Activated T-helper 1 cell treated with anti-CD3 and anti-CD28 coated beads, Interleukin-12 subunit alpha, Interleukin-12 subunit beta, Interleukin-2, Interleukin-4 antibody, amounts not matched to agents 30 ng/mL and 10 ng/mL and 1 ng/mL, durations not matched to agents 14 hours and 24 hours and 36 hours (primary cell): ENCODE measurements at regions of chr1 and their contacts with region 1.

Region 1: GRCh38 chr1:99808391-99809115 is 41.6 kb upstream of the AGL start:
- DNase-seq: peak; percentile 29
- H3K4me3 Mint-ChIP-seq: no peak overlapping the region
- H3K27ac Mint-ChIP-seq: peak overlapping the region; percentile 15
- H3K4me1 Mint-ChIP-seq: peaks cover 17% of the 10 kb centered on the region
- H3K27me3 Mint-ChIP-seq: peaks cover 13% of the 10 kb centered on the region

Region 2: GRCh38 chr1:99786751-99787501 is 21.6 kb before region 1 on chr1:
- intact Hi-C with region 1: no loop called
- DNase-seq: no peak
- H3K4me3 Mint-ChIP-seq: no peak overlapping the region
- H3K27ac Mint-ChIP-seq: no peak overlapping the region
- H3K4me1 Mint-ChIP-seq: peaks cover 26% of the 10 kb centered on the region
- H3K27me3 Mint-ChIP-seq: peaks cover 45% of the 10 kb centered on the region

Region 3: GRCh38 chr1:99969729-99970621 is 161.4 kb after region 1 on chr1 and contains the start of gene SLC35A3:
- intact Hi-C with region 1: loop called (anchors 2 kb)
- DNase-seq: peak; percentile 73
- H3K4me3 Mint-ChIP-seq: peak within 1 kb of the TSS; percentile 99
- H3K27ac Mint-ChIP-seq: peak within 1 kb of the TSS; percentile 95
- H3K4me1 Mint-ChIP-seq: peaks cover 22% of the 10 kb centered on the region
- H3K27me3 Mint-ChIP-seq: no peaks in the 10 kb centered on the region
- total RNA-seq, gene SLC35A3: 16.0 and 16.3 TPM in 2 replicates

Region 4: DNA sequence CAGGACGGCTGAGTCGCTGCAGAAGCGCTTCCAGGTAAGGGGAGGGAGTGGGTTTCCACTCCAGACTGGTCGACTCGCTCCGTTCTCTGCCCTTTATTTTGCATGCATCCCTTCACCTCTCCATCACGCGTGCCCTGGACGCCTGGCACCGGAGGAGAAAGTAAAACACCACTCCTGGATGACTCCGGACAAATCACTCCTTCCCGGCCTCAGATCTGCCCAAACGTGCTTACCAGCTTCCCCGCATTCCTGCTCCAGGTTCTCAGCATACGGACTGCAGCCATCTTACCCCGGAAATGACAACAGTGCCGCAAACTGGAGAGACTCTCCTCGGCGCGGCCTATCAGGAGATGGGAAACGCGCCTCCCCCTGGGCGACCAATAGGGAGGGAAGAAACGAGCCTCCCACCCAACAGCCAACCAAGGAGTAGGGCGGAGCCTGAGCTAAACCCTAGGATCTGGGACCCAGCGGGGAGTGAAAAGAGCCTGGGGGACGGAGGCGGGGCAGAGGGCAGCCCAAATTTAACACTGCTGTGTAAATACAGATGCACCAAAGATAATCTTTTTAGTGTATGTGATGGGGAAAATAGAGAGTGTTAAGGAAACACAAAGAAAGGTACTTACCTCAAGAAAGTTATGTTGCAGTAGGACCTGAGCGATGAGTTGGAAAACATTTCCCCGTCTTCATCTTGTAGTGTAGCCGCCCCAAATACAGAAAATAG is 441.1 kb after region 1 on chr1 and contains the start of gene DBT:
- intact Hi-C with region 1: loop called (anchors 5 kb)
- DNase-seq: peak; percentile 92
- H3K4me3 Mint-ChIP-seq: no peak within 1 kb of the TSS
- H3K27ac Mint-ChIP-seq: no peak within 1 kb of the TSS
- H3K4me1 Mint-ChIP-seq: peaks cover 10% of the 10 kb centered on the region
- H3K27me3 Mint-ChIP-seq: peaks cover 12% of the 10 kb centered on the region
- total RNA-seq, gene DBT: 11.3 and 11.7 TPM in 2 replicates

Region 5: GRCh38 chr1:100543640-100544039 is 735.1 kb after region 1 on chr1:
- intact Hi-C with region 1: loop called (anchors 10 kb)
- DNase-seq: no peak
- H3K4me3 Mint-ChIP-seq: no peak overlapping the region
- H3K27ac Mint-ChIP-seq: no peak overlapping the region
- H3K4me1 Mint-ChIP-seq: peaks cover 5% of the 10 kb centered on the region
- H3K27me3 Mint-ChIP-seq: peaks cover 37% of the 10 kb centered on the region